ENCODE measurements at regions of chr14 and their contacts with region 1.

Region 1: GRCh38 chr14:93115069-93115820 is 480 bp downstream of the ITPK1 start:
- DNase-seq: peak; percentile 30
- H3K4me3 ChIP-seq: peak overlapping the region; percentile 63
- H3K27me3 ChIP-seq: no peaks in the 10 kb centered on the region
- CTCF ChIP-seq: no peak

Region 2: GRCh38 chr14:92951912-92952471 is 163.3 kb before region 1 on chr14:
- CTCF ChIA-PET with region 1: interaction called, 19 read pairs
- POLR2A ChIA-PET with region 1: no interaction called
- DNase-seq: no peak
- H3K4me3 ChIP-seq: no peak overlapping the region
- H3K27me3 ChIP-seq: no peaks in the 10 kb centered on the region
- CTCF ChIP-seq: peak; percentile 95

Region 3: GRCh38 chr14:93103392-93104080 is 11.7 kb before region 1 on chr14:
- CTCF ChIA-PET with region 1: interaction called, 18 read pairs
- POLR2A ChIA-PET with region 1: no interaction called
- DNase-seq: no peak
- H3K4me3 ChIP-seq: no peak overlapping the region
- H3K27me3 ChIP-seq: no peaks in the 10 kb centered on the region
- CTCF ChIP-seq: no peak

Region 4: GRCh38 chr14:93137864-93138263 is 22.6 kb after region 1 on chr14:
- CTCF ChIA-PET with region 1: interaction called, 78 read pairs
- POLR2A ChIA-PET with region 1: no interaction called
- DNase-seq: no peak
- H3K4me3 ChIP-seq: no peak overlapping the region
- H3K27me3 ChIP-seq: peaks cover 3% of the 10 kb centered on the region; the same call in 1 of the 2 replicates
- CTCF ChIP-seq: no peak

Region 5: DNA sequence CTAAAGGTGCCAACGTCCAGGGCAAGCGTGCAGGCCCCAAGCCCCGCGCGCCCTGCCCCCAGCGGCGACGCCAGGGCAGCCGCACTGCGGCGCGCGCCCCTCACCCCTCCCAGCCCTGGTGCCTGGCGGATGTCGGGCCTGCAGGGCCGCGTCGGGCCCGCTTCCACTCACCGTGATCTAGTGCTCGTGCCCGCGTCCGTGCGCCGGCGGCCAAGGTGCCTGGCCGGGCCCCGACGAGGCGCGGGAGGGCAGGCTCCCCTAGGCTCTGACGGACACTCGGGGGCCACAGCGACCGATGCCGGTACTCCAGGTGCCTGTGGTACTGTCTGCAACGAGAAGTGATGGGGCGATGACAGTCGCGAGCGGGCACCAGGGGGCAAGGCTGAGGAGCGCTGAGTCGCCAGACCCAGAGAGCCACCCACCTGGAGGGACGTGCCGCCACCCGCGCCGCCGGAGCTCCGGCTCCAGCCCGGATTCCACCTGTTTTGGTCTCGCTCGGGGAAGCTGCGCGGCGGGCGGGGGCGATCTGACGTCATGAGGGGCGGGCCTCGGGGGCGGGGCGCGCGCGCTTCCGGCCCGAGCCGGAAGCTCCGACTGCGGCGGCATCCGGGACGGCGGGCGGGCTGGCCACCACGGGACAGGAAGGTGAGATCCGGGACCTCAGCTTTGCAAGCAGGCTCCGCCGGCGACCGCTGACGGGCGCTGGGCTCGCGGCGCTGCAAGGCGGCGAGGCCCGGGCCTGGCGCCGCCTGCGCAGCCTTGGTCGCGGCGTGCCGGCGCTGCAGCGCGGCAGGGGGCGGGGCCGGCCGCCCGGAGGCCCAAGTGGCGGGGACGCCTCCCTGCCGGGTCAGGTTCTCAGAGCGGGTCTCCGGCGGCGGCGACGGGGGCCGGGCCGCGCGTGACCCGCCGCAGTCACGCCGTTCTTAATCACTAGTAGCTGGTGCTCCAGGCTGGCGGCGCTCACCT is 69.4 kb after region 1 on chr14 and contains the starts of genes LYSET and MOAP1:
- CTCF ChIA-PET with region 1: interaction called, 18 read pairs
- POLR2A ChIA-PET with region 1: no interaction called
- DNase-seq: no peak
- H3K4me3 ChIP-seq: peak within 1 kb of the TSS; percentile 99
- H3K27me3 ChIP-seq: no peaks in the 10 kb centered on the region
- CTCF ChIP-seq: no peak
- polyA plus RNA-seq, gene LYSET: 6.8 and 12.8 TPM in 2 replicates
- polyA plus RNA-seq, gene MOAP1: 15.5 and 20.0 TPM in 2 replicates

Measured in BJ (cell line).